MCF 10A (cell line): ENCODE measurements at regions of chr3 and their contacts with region 1.

Region 1: DNA sequence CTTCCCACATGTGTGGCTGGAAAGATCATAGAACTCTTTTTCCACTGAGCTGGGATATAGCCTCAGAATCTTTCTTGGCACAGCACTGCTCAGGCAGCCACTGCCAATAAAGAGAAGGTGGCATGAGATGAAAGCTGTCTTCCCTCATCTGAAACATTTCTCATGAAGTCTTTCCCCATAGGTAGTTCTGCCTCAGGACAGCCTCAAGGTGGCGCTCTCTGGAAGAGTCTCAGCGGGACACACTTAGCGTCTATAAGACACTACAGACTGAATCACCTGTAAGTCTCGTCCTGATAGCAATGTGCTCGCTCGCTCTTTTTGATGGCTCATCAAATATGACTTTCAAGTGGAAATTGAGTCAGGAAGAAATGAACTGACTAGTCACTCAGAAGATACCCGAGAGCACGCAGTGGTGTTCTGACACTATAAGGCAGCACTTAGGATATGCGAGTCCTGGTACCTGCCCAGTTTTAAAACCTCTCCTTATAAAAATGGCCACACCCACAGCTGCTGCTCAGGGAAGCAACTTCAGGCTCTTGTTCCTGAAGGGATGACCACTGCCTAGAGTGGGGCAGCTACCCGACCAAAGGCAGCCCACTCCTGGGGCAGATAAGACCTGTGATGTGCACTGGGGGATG is 269.5 kb downstream of the SUCLG2 start:
- DNase-seq: peak; percentile 67
- H3K4me3 Mint-ChIP-seq: no peak overlapping the region
- H3K27ac Mint-ChIP-seq: no peak overlapping the region
- H3K4me1 Mint-ChIP-seq: peaks cover 5% of the 10 kb centered on the region
- H3K27me3 Mint-ChIP-seq: no peaks in the 10 kb centered on the region
- CTCF ChIP-seq: peak; percentile 31

Region 2: GRCh38 chr3:67346081-67346480 is 38.8 kb before region 1 on chr3:
- CTCF ChIA-PET with region 1: no interaction called
- POLR2A ChIA-PET with region 1: no interaction called
- intact Hi-C with region 1: no loop called
- DNase-seq: no peak
- H3K4me3 Mint-ChIP-seq: no peak overlapping the region
- H3K27ac Mint-ChIP-seq: no peak overlapping the region
- H3K4me1 Mint-ChIP-seq: no peaks in the 10 kb centered on the region
- H3K27me3 Mint-ChIP-seq: peaks cover 12% of the 10 kb centered on the region
- CTCF ChIP-seq: no peak

Region 3: GRCh38 chr3:67357610-67358458 is 27.0 kb before region 1 on chr3:
- CTCF ChIA-PET with region 1: interaction called, 13 read pairs
- POLR2A ChIA-PET with region 1: no interaction called
- intact Hi-C with region 1: no loop called
- DNase-seq: peak; percentile 60
- H3K4me3 Mint-ChIP-seq: no peak overlapping the region
- H3K27ac Mint-ChIP-seq: peak overlapping the region; percentile 68
- H3K4me1 Mint-ChIP-seq: no peaks in the 10 kb centered on the region
- H3K27me3 Mint-ChIP-seq: no peaks in the 10 kb centered on the region
- CTCF ChIP-seq: peak; percentile 30

Region 4: DNA sequence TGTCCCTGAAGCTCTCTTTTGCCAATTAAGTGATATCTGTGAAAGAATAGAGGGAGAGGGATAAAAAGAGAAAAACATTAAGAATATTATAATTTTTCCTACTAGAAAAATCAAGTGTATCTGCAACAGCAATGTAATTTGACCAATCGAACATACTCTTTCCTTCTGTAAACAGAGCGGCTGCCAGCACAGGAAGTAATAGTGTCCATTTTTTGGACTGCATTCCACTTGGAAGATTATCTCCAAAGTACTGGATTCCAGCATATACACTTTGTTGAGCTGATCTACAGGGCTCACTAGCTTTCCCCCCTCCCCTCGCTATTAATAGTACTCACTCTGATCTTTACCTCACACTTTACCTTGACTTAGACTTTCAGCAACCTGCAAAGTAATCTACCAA is 179.1 kb after region 1 on chr3:
- CTCF ChIA-PET with region 1: no interaction called
- POLR2A ChIA-PET with region 1: no interaction called
- intact Hi-C with region 1: no loop called
- DNase-seq: no peak
- H3K4me3 Mint-ChIP-seq: no peak overlapping the region
- H3K27ac Mint-ChIP-seq: no peak overlapping the region
- H3K4me1 Mint-ChIP-seq: no peaks in the 10 kb centered on the region
- H3K27me3 Mint-ChIP-seq: no peaks in the 10 kb centered on the region
- CTCF ChIP-seq: no peak

Region 5: DNA sequence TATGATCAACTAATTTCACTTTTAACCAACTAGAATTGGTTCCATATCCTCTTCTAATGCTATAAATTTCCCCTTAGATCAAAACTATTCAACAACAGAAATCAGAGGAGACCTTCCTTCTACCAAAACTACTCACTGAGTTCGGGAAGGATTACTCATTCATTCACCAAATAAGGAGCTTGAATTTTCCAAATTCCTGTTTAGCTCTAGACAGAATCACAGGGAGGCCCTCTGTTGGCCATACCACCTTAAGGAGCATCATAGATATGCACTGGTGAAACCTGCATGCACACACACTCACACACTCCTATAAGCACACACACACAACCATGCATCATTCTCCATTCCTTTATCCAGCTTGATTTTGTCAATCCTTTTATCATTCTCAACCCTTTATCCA is 220.5 kb after region 1 on chr3:
- CTCF ChIA-PET with region 1: no interaction called
- POLR2A ChIA-PET with region 1: no interaction called
- intact Hi-C with region 1: loop called (anchors 5 kb)
- DNase-seq: peak; percentile 65
- H3K4me3 Mint-ChIP-seq: no peak overlapping the region
- H3K27ac Mint-ChIP-seq: peak overlapping the region; percentile 58
- H3K4me1 Mint-ChIP-seq: peaks cover 24% of the 10 kb centered on the region
- H3K27me3 Mint-ChIP-seq: no peaks in the 10 kb centered on the region
- CTCF ChIP-seq: peak; percentile 15

Region 6: GRCh38 chr3:67654099-67654843 is 269.4 kb after region 1 on chr3 and contains the start of gene SUCLG2:
- CTCF ChIA-PET with region 1: interaction called, 7 read pairs
- POLR2A ChIA-PET with region 1: no interaction called
- intact Hi-C with region 1: loop called (anchors 5 kb)
- DNase-seq: peak; percentile 88
- H3K4me3 Mint-ChIP-seq: peak within 1 kb of the TSS; percentile 73
- H3K27ac Mint-ChIP-seq: peak within 1 kb of the TSS; percentile 70
- H3K4me1 Mint-ChIP-seq: peaks cover 26% of the 10 kb centered on the region
- H3K27me3 Mint-ChIP-seq: no peaks in the 10 kb centered on the region
- CTCF ChIP-seq: no peak
- total RNA-seq, gene SUCLG2: 39.1 and 55.6 TPM in 2 replicates

Region 7: GRCh38 chr3:67790043-67790442 is 405.2 kb after region 1 on chr3:
- CTCF ChIA-PET with region 1: interaction called, 5 read pairs
- POLR2A ChIA-PET with region 1: no interaction called
- intact Hi-C with region 1: loop called (anchors 1 kb)
- DNase-seq: peak; percentile 70
- H3K4me3 Mint-ChIP-seq: no peak overlapping the region
- H3K27ac Mint-ChIP-seq: no peak overlapping the region
- H3K4me1 Mint-ChIP-seq: no peaks in the 10 kb centered on the region
- H3K27me3 Mint-ChIP-seq: peaks cover 55% of the 10 kb centered on the region
- CTCF ChIP-seq: peak; percentile 41

Region 8: DNA sequence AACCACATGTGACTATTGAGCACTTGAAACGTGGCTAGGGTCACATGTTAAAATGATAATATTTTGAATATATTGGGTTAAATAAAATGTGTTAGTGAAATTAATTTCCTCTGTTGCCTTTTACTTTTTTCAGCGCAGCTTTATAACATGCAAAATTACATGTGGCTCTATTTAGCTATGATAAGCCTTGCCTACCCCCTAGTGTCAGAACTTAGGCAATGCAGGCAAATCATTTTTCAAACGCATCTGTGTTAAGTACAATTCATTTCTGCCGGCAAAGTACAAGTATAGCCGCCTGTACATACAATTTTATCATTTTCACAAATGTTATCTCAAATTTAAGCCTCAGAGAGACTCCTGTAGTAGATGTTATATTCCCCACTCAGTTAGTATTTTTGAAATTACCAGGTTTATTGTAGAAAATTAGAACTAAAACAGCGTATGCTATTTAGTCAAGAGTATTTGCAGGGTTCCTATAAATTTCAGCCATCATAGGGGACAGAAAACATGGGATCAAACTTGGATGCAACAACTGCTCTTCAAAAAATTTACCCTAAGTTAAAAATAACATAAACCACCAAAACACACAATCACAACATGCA is 1491.3 kb after region 1 on chr3:
- CTCF ChIA-PET with region 1: interaction called, 4 read pairs
- POLR2A ChIA-PET with region 1: interaction called, 3 read pairs
- intact Hi-C with region 1: loop called (anchors 10 kb)
- DNase-seq: peak; percentile 74
- H3K4me3 Mint-ChIP-seq: no peak overlapping the region
- H3K27ac Mint-ChIP-seq: no peak overlapping the region
- H3K4me1 Mint-ChIP-seq: no peaks in the 10 kb centered on the region
- H3K27me3 Mint-ChIP-seq: peaks cover 76% of the 10 kb centered on the region
- CTCF ChIP-seq: peak; percentile 77